Caco-2 (cell line): ENCODE measurements at regions of chrX and their contacts with region 1.

Region 1: GRCh38 chrX:68498508-68499379 is at the start of gene YIPF6:
- DNase-seq: peak; percentile 80 to 82
- H3K4me3 ChIP-seq: peak within 1 kb of the TSS; percentile 75
- H3K4me3 Mint-ChIP-seq: peak within 1 kb of the TSS; percentile 84
- H3K27ac Mint-ChIP-seq: peak within 1 kb of the TSS; percentile 96
- H3K4me1 ChIP-seq: no peaks in the 10 kb centered on the region
- H3K4me1 Mint-ChIP-seq: no peaks in the 10 kb centered on the region
- H3K27me3 ChIP-seq: no peaks in the 10 kb centered on the region
- H3K27me3 Mint-ChIP-seq: no peaks in the 10 kb centered on the region
- CTCF ChIP-seq: no peak
- total RNA-seq, gene YIPF6: 42.0 and 43.5 TPM in 2 replicates

Region 2: DNA sequence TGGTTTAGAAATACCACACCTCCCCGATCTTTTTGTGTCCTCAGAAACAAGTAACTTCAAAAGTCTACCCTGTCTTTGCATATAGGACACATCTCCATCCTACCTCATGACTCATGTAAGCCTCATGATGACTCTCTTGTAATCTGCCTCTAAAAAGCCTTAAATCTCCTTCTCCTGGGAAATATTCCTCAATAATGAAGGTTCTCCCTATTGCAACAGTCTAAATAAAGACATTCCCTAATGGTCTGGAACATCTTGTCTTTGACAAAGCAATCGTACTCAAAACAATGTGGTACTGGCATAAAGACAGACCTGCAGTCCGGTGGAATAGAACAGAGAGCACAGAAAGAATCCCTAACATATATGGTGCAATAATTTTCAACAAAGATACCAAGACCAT is 323.2 kb before region 1 on chrX:
- CTCF ChIA-PET with region 1: no interaction called
- POLR2A ChIA-PET with region 1: no interaction called
- intact Hi-C with region 1: no loop called
- DNase-seq: no peak
- H3K4me3 ChIP-seq: no peak overlapping the region
- H3K4me3 Mint-ChIP-seq: no peak overlapping the region
- H3K27ac Mint-ChIP-seq: no peak overlapping the region
- H3K4me1 ChIP-seq: no peaks in the 10 kb centered on the region
- H3K4me1 Mint-ChIP-seq: no peaks in the 10 kb centered on the region
- H3K27me3 ChIP-seq: no peaks in the 10 kb centered on the region
- H3K27me3 Mint-ChIP-seq: no peaks in the 10 kb centered on the region
- CTCF ChIP-seq: no peak

Region 3: DNA sequence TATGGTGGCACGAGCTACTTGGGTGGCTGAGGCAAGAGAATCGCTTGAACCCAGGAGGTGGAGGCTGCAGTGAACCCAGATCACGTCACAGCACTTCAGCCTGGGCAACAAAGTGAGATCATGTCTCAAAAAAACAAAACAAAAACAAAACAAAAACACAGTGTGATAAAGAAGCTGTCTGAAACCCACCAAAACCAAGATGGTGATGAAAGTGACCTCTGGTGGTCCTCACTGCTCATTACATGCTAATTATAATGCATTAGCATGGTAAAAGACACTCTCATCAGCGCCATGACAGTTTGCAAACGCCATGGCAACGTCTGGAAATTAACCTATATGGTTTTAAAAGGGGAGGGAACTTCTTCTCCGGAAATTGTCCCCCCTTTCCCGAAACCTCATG is 36.1 kb before region 1 on chrX:
- CTCF ChIA-PET with region 1: no interaction called
- POLR2A ChIA-PET with region 1: no interaction called
- intact Hi-C with region 1: no loop called
- DNase-seq: peak in 1 of 2 experiments; percentile 18
- H3K4me3 ChIP-seq: no peak overlapping the region
- H3K4me3 Mint-ChIP-seq: no peak overlapping the region
- H3K27ac Mint-ChIP-seq: no peak overlapping the region
- H3K4me1 ChIP-seq: peaks cover 14% of the 10 kb centered on the region
- H3K4me1 Mint-ChIP-seq: no peaks in the 10 kb centered on the region
- H3K27me3 ChIP-seq: no peaks in the 10 kb centered on the region
- H3K27me3 Mint-ChIP-seq: no peaks in the 10 kb centered on the region
- CTCF ChIP-seq: peak in 1 of 2 experiments; percentile 26

Region 4: GRCh38 chrX:68532831-68533533 is 34.2 kb after region 1 on chrX:
- CTCF ChIA-PET with region 1: no interaction called
- POLR2A ChIA-PET with region 1: interaction called, 13 read pairs
- intact Hi-C with region 1: no loop called
- DNase-seq: no peak
- H3K4me3 ChIP-seq: no peak overlapping the region
- H3K4me3 Mint-ChIP-seq: no peak overlapping the region
- H3K27ac Mint-ChIP-seq: no peak overlapping the region
- H3K4me1 ChIP-seq: no peaks in the 10 kb centered on the region
- H3K4me1 Mint-ChIP-seq: peaks cover 7% of the 10 kb centered on the region
- H3K27me3 ChIP-seq: no peaks in the 10 kb centered on the region
- H3K27me3 Mint-ChIP-seq: no peaks in the 10 kb centered on the region
- CTCF ChIP-seq: no peak